Natural killer cell (primary cell): ENCODE measurements at regions of chr5 and their contacts with region 1.

Region 1: GRCh38 chr5:143403593-143404415 is at the start of gene NR3C1:
- DNase-seq: peak; percentile 87 to 95
- ATAC-seq: peak; percentile 71 to 89 (median 76)
- H3K4me3 ChIP-seq: peak within 1 kb of the TSS; percentile 77
- H3K4me3 Mint-ChIP-seq: peak within 1 kb of the TSS; percentile 97
- H3K27ac ChIP-seq: peak within 1 kb of the TSS; percentile 95
- H3K27ac Mint-ChIP-seq: peak within 1 kb of the TSS; percentile 97 to 99
- H3K4me1 ChIP-seq: peaks cover 24% of the 10 kb centered on the region
- H3K4me1 Mint-ChIP-seq: peaks cover 50 to 57% of the 10 kb centered on the region in 2 donors
- H3K27me3 ChIP-seq: no peaks in the 10 kb centered on the region
- H3K27me3 Mint-ChIP-seq: no peaks in the 10 kb centered on the region
- CTCF ChIP-seq: peak; percentile 45
- total RNA-seq, gene NR3C1: 147 to 168 (median 165) TPM

Region 2: GRCh38 chr5:142783601-142784341 is 620.0 kb before region 1 on chr5:
- intact Hi-C with region 1: loop called (anchors 5 kb)
- DNase-seq: peak; percentile 55 to 70
- ATAC-seq: peak; percentile 67 to 82 (median 77)
- H3K4me3 ChIP-seq: peak overlapping the region; percentile 14
- H3K4me3 Mint-ChIP-seq: peak overlapping the region; percentile 69
- H3K27ac ChIP-seq: peak overlapping the region; percentile 62
- H3K27ac Mint-ChIP-seq: peak overlapping the region; percentile 91 to 94
- H3K4me1 ChIP-seq: peaks cover 72% of the 10 kb centered on the region
- H3K4me1 Mint-ChIP-seq: peaks cover 94 to 96% of the 10 kb centered on the region in 2 donors
- H3K27me3 ChIP-seq: no peaks in the 10 kb centered on the region
- H3K27me3 Mint-ChIP-seq: no peaks in the 10 kb centered on the region
- CTCF ChIP-seq: no peak

Region 3: GRCh38 chr5:143002459-143003328 is 401.1 kb before region 1 on chr5:
- intact Hi-C with region 1: loop called (anchors 2 kb)
- DNase-seq: peak; percentile 65 to 91
- ATAC-seq: peak; percentile 77 to 90 (median 83)
- H3K4me3 ChIP-seq: no peak overlapping the region
- H3K4me3 Mint-ChIP-seq: peak overlapping the region; percentile 91
- H3K27ac ChIP-seq: peak overlapping the region; percentile 85
- H3K27ac Mint-ChIP-seq: peak overlapping the region; percentile 96 to 100
- H3K4me1 ChIP-seq: peaks cover 74% of the 10 kb centered on the region
- H3K4me1 Mint-ChIP-seq: peaks cover 94% of the 10 kb centered on the region in 2 donors
- H3K27me3 ChIP-seq: no peaks in the 10 kb centered on the region
- H3K27me3 Mint-ChIP-seq: no peaks in the 10 kb centered on the region
- CTCF ChIP-seq: peak; percentile 69

Region 4: GRCh38 chr5:143319437-143320227 is 84.2 kb before region 1 on chr5:
- intact Hi-C with region 1: loop called (anchors 5 kb)
- DNase-seq: no peak
- ATAC-seq: peak in 1 of 3 donors; percentile 51
- H3K4me3 ChIP-seq: no peak overlapping the region
- H3K4me3 Mint-ChIP-seq: no peak overlapping the region
- H3K27ac ChIP-seq: no peak overlapping the region
- H3K27ac Mint-ChIP-seq: peak overlapping the region; percentile 64 to 65
- H3K4me1 ChIP-seq: peaks cover 15% of the 10 kb centered on the region
- H3K4me1 Mint-ChIP-seq: peaks cover 64 to 75% of the 10 kb centered on the region in 2 donors
- H3K27me3 ChIP-seq: no peaks in the 10 kb centered on the region
- H3K27me3 Mint-ChIP-seq: no peaks in the 10 kb centered on the region
- CTCF ChIP-seq: no peak

Region 5: GRCh38 chr5:143435210-143435657 is 31.4 kb after region 1 on chr5:
- intact Hi-C with region 1: no loop called
- DNase-seq: peak in 1 of 2 donors; percentile 77
- ATAC-seq: peak; percentile 66 to 84 (median 82)
- H3K4me3 ChIP-seq: peak overlapping the region; percentile 40
- H3K4me3 Mint-ChIP-seq: peak overlapping the region; percentile 89
- H3K27ac ChIP-seq: peak overlapping the region; percentile 68
- H3K27ac Mint-ChIP-seq: peak overlapping the region; percentile 51 to 82
- H3K4me1 ChIP-seq: peaks cover 5% of the 10 kb centered on the region
- H3K4me1 Mint-ChIP-seq: peaks cover 18% of the 10 kb centered on the region in 2 donors
- H3K27me3 ChIP-seq: no peaks in the 10 kb centered on the region
- H3K27me3 Mint-ChIP-seq: peaks cover 0 to 7% of the 10 kb centered on the region in 2 donors
- CTCF ChIP-seq: no peak

Region 6: GRCh38 chr5:144191998-144192397 is 788.2 kb after region 1 on chr5:
- intact Hi-C with region 1: loop called (anchors 10 kb)
- DNase-seq: peak in 1 of 2 donors; percentile 92
- ATAC-seq: peak; percentile 72 to 89 (median 75)
- H3K4me3 ChIP-seq: no peak overlapping the region
- H3K4me3 Mint-ChIP-seq: no peak overlapping the region
- H3K27ac ChIP-seq: peak overlapping the region; percentile 76
- H3K27ac Mint-ChIP-seq: no peak overlapping the region
- H3K4me1 ChIP-seq: peaks cover 17% of the 10 kb centered on the region
- H3K4me1 Mint-ChIP-seq: peaks cover 30 to 37% of the 10 kb centered on the region in 2 donors
- H3K27me3 ChIP-seq: no peaks in the 10 kb centered on the region
- H3K27me3 Mint-ChIP-seq: peaks cover 13 to 14% of the 10 kb centered on the region in 2 donors
- CTCF ChIP-seq: peak; percentile 59

Region 7: DNA sequence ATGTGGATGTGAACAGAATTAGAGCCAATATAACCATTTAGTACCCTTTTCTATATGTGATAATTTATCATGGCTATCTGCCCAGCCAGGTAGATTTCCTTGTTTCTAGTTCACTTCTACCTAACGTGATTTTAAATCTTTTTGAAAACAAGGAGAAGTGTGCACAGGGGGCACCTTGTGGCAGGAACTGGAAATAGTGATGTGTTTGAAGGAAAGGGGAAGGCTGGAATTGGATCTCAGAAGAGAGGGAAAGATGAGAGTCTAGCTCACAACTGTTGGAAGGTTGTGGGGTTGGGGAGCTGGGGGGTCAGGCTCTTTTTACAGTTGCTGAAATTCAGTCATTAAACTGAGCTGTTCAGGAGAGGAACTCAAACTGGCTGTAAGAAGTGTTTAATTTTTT is 986.3 kb after region 1 on chr5:
- intact Hi-C with region 1: no loop called
- DNase-seq: no peak
- ATAC-seq: no peak
- H3K4me3 ChIP-seq: no peak overlapping the region
- H3K4me3 Mint-ChIP-seq: no peak overlapping the region
- H3K27ac ChIP-seq: no peak overlapping the region
- H3K27ac Mint-ChIP-seq: no peak overlapping the region
- H3K4me1 ChIP-seq: no peaks in the 10 kb centered on the region
- H3K4me1 Mint-ChIP-seq: no peaks in the 10 kb centered on the region
- H3K27me3 ChIP-seq: no peaks in the 10 kb centered on the region
- H3K27me3 Mint-ChIP-seq: no peaks in the 10 kb centered on the region
- CTCF ChIP-seq: no peak